Heart left ventricle (tissue), 16 donors: ENCODE measurements at regions of chr1 and their contacts with region 1.

Region 1: GRCh38 chr1:39609618-39610331 is 29.7 kb downstream of the HEYL start:
- DNase-seq: peak; percentile 68 to 87 (median 77)
- ATAC-seq: peak; percentile 41 to 90 (median 80)
- H3K4me3 ChIP-seq: peak overlapping the region in 2 of 12 donors; percentile 5 to 20
- H3K27ac ChIP-seq: peak overlapping the region in 9 of 12 donors; percentile 37 to 72 (median 42)
- H3K4me1 ChIP-seq: peaks cover 0 to 19% (median 7%) of the 10 kb centered on the region in 12 donors
- H3K27me3 ChIP-seq: peaks cover 0 to 10% (median 0%) of the 10 kb centered on the region in 9 donors
- CTCF ChIP-seq: peak; percentile 50 to 87 (median 68)
- POLR2A ChIP-seq: no peak

Region 2: DNA sequence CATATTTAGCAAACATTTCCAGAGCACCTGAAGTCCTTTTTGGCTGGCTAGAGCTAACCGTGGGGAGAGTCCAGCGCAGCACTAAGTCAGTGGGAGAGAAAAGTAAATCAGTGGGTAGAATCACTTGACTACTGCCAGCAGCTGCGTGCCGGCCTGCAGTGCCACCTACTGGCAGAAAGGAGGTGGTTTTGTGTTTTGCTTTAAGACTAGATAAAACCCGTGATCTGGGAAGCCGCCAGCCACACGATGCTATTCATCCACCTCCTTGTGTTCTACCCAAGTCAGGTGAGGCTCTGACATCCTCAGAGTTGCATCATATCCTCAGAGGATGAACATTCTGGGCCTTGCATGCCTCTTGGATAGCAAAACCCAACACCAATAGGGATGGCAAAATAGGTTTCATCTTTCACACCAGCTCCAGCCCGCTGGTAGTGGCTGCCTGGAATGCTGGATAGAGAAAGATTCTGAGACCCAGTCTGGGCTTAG is 43.8 kb after region 1 on chr1:
- intact Hi-C with region 1: loop called (anchors 1 to 2 kb)
- DNase-seq: peak; percentile 69 to 86 (median 80)
- ATAC-seq: peak in 3 of 4 donors; percentile 57 to 70 (median 63)
- H3K4me3 ChIP-seq: no peak overlapping the region
- H3K27ac ChIP-seq: peak overlapping the region in 6 of 12 donors; percentile 61 to 77 (median 74)
- H3K4me1 ChIP-seq: peaks cover 0 to 51% (median 14%) of the 10 kb centered on the region in 12 donors
- H3K27me3 ChIP-seq: no peaks in the 10 kb centered on the region
- CTCF ChIP-seq: peak; percentile 84 to 96 (median 92)
- POLR2A ChIP-seq: no peak

Region 3: GRCh38 chr1:39683591-39684312 is 74.0 kb after region 1 on chr1:
- intact Hi-C with region 1: no loop called
- DNase-seq: peak in 1 of 5 donors; percentile 57
- ATAC-seq: peak in 1 of 4 donors; percentile 36
- H3K4me3 ChIP-seq: peak overlapping the region in 2 of 12 donors; percentile 17 to 30
- H3K27ac ChIP-seq: no peak overlapping the region
- H3K4me1 ChIP-seq: no peaks in the 10 kb centered on the region
- H3K27me3 ChIP-seq: peaks cover 5 to 49% (median 28%) of the 10 kb centered on the region in 9 donors
- CTCF ChIP-seq: no peak
- POLR2A ChIP-seq: no peak

Region 4: DNA sequence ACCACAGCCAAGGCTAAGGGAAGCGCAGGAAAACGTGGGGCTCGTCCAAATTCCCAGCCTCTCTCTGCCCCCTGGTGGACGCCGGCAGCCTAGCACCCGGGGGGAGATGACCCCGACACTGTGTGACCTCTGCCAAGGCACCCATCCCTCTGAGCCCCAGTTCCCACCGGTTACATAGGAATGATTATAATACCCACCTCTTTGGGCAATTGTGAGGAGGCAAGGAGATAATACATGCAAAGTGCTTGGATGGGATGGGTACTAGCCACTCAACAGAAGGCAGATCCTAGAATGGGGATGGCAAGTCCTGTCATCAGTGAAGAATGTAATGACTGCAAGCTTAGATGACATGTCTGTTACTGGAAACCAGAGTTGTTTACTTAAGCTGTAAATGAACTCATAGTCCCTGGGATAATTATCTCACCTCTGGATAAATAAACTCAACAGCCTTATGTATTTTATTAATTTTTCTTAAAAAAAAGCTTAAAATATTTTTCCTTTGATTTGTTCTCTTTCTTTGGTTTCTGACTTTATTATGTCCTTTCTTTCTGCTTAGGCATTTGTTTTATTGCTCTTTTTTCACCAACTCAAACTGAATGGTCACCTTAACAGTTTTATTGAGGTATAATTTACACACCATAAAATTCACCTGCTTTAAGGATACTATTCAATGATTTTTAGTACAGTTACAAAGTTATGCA is 190.1 kb after region 1 on chr1:
- intact Hi-C with region 1: loop called in 3 of 10 experiments (anchors 10 kb)
- DNase-seq: peak; percentile 51 to 84 (median 59)
- ATAC-seq: peak; percentile 75 to 93 (median 90)
- H3K4me3 ChIP-seq: peak overlapping the region in 2 of 12 donors; percentile 15 to 40
- H3K27ac ChIP-seq: no peak overlapping the region
- H3K4me1 ChIP-seq: peaks cover 0 to 13% (median 0%) of the 10 kb centered on the region in 12 donors
- H3K27me3 ChIP-seq: no peaks in the 10 kb centered on the region
- CTCF ChIP-seq: peak; percentile 59 to 74 (median 66)
- POLR2A ChIP-seq: no peak

Region 5: GRCh38 chr1:39892601-39893595 is 283.1 kb after region 1 on chr1:
- intact Hi-C with region 1: no loop called
- DNase-seq: no peak
- ATAC-seq: no peak
- H3K4me3 ChIP-seq: no peak overlapping the region
- H3K27ac ChIP-seq: no peak overlapping the region
- H3K4me1 ChIP-seq: peaks cover 0 to 26% (median 3%) of the 10 kb centered on the region in 12 donors
- H3K27me3 ChIP-seq: peaks cover 0 to 21% (median 0%) of the 10 kb centered on the region in 9 donors
- CTCF ChIP-seq: no peak
- POLR2A ChIP-seq: no peak